Common myeloid progenitor, CD34-positive (primary cell): ENCODE measurements at regions of chr20 and their contacts with region 1.

Region 1: DNA sequence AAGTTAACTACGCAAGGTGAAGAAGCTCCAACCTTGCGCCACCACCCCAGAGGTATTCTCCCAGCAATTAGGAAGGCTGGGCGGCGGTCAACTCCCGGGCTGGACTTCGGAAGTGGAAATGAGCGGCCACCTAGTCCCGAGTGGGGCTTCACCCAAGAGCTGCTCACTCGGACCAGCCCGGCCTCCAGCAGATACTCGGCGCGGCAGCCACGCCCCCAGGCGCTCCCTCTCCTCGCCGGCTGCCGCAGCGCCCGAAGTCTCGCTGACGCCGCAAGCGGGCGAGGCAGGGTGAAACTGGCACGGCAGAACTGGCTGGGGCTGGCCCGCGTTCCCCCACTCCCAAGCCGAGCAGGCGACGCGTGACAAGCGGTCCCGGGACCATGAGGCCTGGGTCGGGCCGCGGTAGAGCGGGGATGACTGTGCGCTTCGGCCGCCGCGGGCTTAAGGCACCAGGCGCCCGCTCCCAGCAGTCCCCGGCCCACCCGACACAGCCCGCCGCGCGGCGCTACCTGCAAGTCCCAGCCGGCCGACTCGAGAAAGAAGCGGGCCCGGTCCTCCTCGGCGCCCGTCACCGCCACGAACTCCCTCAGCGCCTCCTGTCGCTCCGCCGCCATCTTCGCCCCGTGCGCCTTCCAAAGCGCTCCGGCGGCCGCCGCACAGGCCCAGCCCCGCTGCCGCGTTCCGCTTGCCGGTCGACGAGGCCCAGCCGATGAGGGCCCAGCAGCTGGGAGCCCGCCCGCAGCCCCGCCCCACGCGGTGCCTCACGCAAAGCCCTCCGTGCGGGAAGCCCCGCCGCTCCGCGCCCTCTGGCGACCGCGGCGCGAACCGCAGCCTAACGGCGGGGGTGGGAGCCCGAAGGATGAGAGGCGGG is at the start of gene NSFL1C:
- DNase-seq: peak; percentile 96 to 98 (median 97)
- H3K4me3 ChIP-seq: peak within 1 kb of the TSS; percentile 84 to 91 (median 89)
- H3K27ac ChIP-seq: peak within 1 kb of the TSS; percentile 99 to 100
- H3K4me1 ChIP-seq: peaks cover 13 to 54% (median 39%) of the 10 kb centered on the region in 4 experiments
- H3K27me3 ChIP-seq: no peaks in the 10 kb centered on the region

Region 2: DNA sequence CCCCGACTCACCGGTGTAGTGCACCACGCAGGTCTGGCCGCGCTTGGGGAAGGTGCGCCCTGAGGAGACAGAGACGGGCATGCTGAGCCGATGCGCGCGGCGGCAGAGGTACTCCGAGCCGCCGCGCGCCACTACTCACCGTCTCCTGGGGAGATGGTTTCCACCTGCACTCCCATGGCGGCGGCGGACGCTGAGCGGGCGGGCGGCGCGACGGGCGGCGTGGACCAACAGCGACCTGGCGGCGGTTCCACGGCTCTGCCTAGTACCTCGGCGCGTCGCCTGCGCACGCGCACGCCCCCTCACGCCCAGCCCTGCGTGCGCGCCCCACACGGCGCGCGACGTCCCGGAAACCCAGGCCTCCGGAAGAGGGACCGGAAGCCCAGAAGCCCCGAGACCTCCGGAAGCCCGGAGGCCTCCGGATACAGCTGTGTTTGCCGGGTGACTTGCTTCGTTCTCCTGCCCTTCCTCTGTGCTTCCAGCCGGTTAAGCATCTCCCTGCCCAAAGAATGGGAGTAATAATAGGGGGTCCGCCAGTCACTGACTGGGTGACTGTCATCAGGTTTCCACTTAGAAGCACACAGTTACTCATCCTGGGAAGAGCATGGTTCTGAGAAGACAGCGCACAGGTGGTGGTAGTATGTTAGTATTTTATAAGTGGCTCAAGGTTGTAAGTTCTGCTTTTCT is 73.5 kb before region 1 on chr20 and contains the start of gene FKBP1A:
- CTCF ChIA-PET with region 1: no interaction called
- POLR2A ChIA-PET with region 1: interaction called, 11 read pairs
- DNase-seq: peak; percentile 94 to 97 (median 96)
- H3K4me3 ChIP-seq: peak within 1 kb of the TSS; percentile 53 to 93 (median 84)
- H3K27ac ChIP-seq: peak within 1 kb of the TSS; percentile 27 to 80
- H3K4me1 ChIP-seq: peaks cover 28 to 85% (median 74%) of the 10 kb centered on the region in 4 experiments
- H3K27me3 ChIP-seq: no peaks in the 10 kb centered on the region

Region 3: GRCh38 chr20:1450926-1451491 is 15.4 kb before region 1 on chr20:
- CTCF ChIA-PET with region 1: interaction called, 26 read pairs
- POLR2A ChIA-PET with region 1: interaction called, 3 read pairs
- DNase-seq: peak in 2 of 3 donors; percentile 53 to 62
- H3K4me3 ChIP-seq: peak overlapping the region in 1 of 7 experiments; percentile 24
- H3K27ac ChIP-seq: no peak overlapping the region
- H3K4me1 ChIP-seq: no peaks in the 10 kb centered on the region
- H3K27me3 ChIP-seq: no peaks in the 10 kb centered on the region

Region 4: DNA sequence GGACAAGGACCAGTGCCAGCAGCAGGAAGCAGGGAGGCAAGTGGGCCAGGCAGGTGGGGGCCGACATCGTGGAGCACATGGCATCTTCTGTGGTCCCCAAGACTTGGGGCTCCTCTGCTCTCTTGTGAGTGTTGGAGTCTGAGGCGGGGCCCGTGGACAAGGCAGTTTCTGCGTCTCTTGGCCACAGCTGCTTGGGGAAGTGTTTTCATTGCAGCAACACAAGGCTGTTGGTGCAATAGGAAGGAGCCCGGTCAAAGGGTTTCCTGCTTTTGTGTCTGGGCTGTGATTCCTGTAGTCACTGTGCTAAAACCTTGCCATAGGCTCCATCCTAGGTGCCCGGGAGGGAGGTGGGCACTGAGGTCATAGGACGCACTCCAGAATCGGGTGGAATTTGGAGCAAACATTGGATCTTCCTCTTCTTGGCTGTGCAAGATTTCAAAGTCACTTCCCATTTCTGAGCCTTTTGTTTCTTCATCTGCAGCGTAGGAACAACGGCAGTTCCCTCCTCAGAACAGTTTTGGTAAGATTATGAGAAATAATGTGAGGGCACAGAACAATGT is 24.9 kb after region 1 on chr20 and contains the start of gene SIRPB2:
- CTCF ChIA-PET with region 1: interaction called, 13 read pairs
- POLR2A ChIA-PET with region 1: interaction called, 5 read pairs
- DNase-seq: peak; percentile 45 to 92 (median 86)
- H3K4me3 ChIP-seq: peak within 1 kb of the TSS in 5 of 7 experiments; percentile 3 to 65 (median 49)
- H3K27ac ChIP-seq: no peak within 1 kb of the TSS
- H3K4me1 ChIP-seq: peaks cover 20 to 60% (median 41%) of the 10 kb centered on the region in 4 experiments
- H3K27me3 ChIP-seq: no peaks in the 10 kb centered on the region

Region 5: DNA sequence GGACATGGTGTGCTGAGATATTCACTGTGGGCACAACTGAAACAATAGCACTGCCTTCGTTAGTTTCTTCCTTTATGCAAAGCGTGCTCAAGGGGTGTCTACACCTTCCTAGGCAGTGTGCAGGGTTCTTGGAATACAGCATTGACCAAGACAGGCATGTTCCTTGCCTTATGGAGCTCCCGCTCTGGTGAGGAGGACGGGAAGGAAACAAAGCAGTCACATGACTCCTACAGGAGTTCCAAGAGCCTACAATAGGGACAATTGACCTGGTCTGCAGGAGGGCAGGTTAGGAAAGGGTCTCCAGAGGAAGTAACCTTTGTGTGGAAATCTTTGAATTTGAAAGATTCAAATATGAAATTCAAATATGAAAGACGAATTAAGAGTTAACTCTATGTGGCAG is 50.6 kb after region 1 on chr20:
- CTCF ChIA-PET with region 1: no interaction called
- POLR2A ChIA-PET with region 1: no interaction called
- DNase-seq: no peak
- H3K4me3 ChIP-seq: no peak overlapping the region
- H3K27ac ChIP-seq: no peak overlapping the region
- H3K4me1 ChIP-seq: peaks cover 0 to 11% (median 8%) of the 10 kb centered on the region in 4 experiments
- H3K27me3 ChIP-seq: no peaks in the 10 kb centered on the region

Region 6: GRCh38 chr20:1761116-1761515 is 294.7 kb after region 1 on chr20:
- CTCF ChIA-PET with region 1: no interaction called
- POLR2A ChIA-PET with region 1: no interaction called
- DNase-seq: no peak
- H3K4me3 ChIP-seq: no peak overlapping the region
- H3K27ac ChIP-seq: no peak overlapping the region
- H3K4me1 ChIP-seq: peaks cover 8 to 18% (median 13%) of the 10 kb centered on the region in 4 experiments
- H3K27me3 ChIP-seq: peaks cover 0 to 4% (median 0%) of the 10 kb centered on the region in 5 experiments

Region 7: DNA sequence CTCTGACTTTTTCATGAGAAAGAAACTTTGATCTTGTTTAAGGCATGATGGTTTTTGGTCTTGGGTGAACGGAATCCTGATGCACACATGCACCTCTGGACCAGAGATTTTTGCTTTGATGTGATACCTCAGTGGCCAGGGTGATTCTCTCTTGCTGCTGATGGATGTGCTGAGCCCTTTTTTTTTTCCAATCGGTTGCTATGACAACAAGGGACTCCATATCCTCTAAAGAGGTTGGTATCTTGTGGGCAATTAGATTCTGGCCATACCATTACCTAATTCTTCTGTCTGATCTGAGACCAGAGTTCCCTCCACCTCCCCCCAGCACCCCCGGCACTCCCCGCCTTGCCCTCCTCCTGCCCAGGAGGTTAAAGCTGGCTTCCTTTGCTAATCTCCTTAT is 502.5 kb after region 1 on chr20:
- CTCF ChIA-PET with region 1: no interaction called
- POLR2A ChIA-PET with region 1: no interaction called
- DNase-seq: no peak
- H3K4me3 ChIP-seq: no peak overlapping the region
- H3K27ac ChIP-seq: no peak overlapping the region
- H3K4me1 ChIP-seq: peaks cover 10 to 18% (median 11%) of the 10 kb centered on the region in 4 experiments
- H3K27me3 ChIP-seq: peaks cover 0 to 18% (median 6%) of the 10 kb centered on the region in 5 experiments